ENCODE measurements at regions of chr9 and their contacts with region 1.

Region 1: GRCh38 chr9:114988962-114989599 is 58.7 kb upstream of the TNFSF8 start:
- DNase-seq: peak; percentile 47
- H3K4me3 Mint-ChIP-seq: peak overlapping the region; percentile 37
- H3K27ac Mint-ChIP-seq: peak overlapping the region; percentile 95
- H3K4me1 Mint-ChIP-seq: peaks cover 87% of the 10 kb centered on the region
- H3K27me3 Mint-ChIP-seq: no peaks in the 10 kb centered on the region

Region 2: GRCh38 chr9:114691046-114691955 is 297.8 kb before region 1 on chr9:
- intact Hi-C with region 1: loop called (anchors 1 kb)
- DNase-seq: peak; percentile 80
- H3K4me3 Mint-ChIP-seq: peak overlapping the region; percentile 69
- H3K27ac Mint-ChIP-seq: peak overlapping the region; percentile 98
- H3K4me1 Mint-ChIP-seq: peaks cover 93% of the 10 kb centered on the region
- H3K27me3 Mint-ChIP-seq: no peaks in the 10 kb centered on the region

Region 3: GRCh38 chr9:114718801-114719221 is 270.3 kb before region 1 on chr9:
- intact Hi-C with region 1: loop called (anchors 1 kb)
- DNase-seq: peak; percentile 94
- H3K4me3 Mint-ChIP-seq: peak overlapping the region; percentile 28
- H3K27ac Mint-ChIP-seq: peak overlapping the region; percentile 98
- H3K4me1 Mint-ChIP-seq: peaks cover 82% of the 10 kb centered on the region
- H3K27me3 Mint-ChIP-seq: peaks cover 2% of the 10 kb centered on the region

Region 4: DNA sequence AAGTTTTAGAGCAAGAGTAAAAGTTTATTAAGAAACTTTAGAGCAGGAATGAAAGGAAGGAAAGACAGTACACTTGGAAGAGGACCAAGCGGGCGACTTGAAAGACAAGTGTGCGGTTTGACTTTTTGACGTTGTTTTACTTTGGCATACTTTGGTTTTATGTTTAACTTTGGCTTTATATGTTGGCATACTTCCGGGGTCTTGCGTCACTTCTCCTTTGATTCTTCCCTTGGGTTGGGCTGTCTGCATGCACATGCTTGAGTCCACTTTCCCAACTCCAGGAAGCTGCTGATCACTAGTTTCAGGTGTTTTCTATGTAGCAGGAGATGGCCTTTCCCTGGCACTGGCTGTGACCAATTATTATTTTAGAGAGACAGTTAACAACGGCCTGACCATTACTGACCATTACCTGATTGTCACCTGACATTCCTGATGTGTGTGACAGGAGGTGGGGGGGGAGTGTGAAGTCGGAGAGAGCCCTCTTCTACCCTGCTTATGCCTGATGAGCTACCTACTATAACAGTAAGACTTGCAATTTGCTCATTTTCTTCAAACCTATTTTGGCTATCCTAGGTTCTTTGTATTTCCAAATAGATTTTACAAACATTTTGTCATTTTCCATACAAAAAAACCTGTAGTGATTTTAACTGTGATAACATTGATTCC is 104.2 kb before region 1 on chr9:
- intact Hi-C with region 1: no loop called
- DNase-seq: no peak
- H3K4me3 Mint-ChIP-seq: no peak overlapping the region
- H3K27ac Mint-ChIP-seq: no peak overlapping the region
- H3K4me1 Mint-ChIP-seq: peaks cover 22% of the 10 kb centered on the region
- H3K27me3 Mint-ChIP-seq: no peaks in the 10 kb centered on the region

Region 5: GRCh38 chr9:114919611-114920010 is 69.5 kb before region 1 on chr9:
- intact Hi-C with region 1: loop called (anchors 1 kb)
- DNase-seq: no peak
- H3K4me3 Mint-ChIP-seq: peak overlapping the region; percentile 63
- H3K27ac Mint-ChIP-seq: peak overlapping the region; percentile 64
- H3K4me1 Mint-ChIP-seq: peaks cover 94% of the 10 kb centered on the region
- H3K27me3 Mint-ChIP-seq: no peaks in the 10 kb centered on the region

Region 6: DNA sequence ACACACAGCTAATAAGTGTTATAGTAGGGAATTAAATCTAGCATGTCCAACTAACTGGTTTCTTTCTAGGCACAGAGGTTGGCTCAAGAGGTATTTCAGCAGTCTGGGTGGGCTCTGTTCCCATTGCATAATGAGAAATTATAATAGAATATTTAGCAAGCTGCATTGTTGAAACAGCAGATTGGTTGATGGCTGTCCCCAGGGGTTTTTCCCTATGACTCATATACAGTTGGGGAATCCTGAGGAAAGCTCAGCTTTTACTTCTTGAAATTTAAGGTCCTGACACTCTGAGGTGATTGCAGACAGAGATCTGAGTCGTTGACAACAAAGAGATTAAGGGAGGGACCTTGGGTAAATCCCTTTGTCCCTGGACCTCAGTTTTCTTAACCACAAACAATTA is 20.4 kb before region 1 on chr9:
- intact Hi-C with region 1: loop called (anchors 1 kb)
- DNase-seq: no peak
- H3K4me3 Mint-ChIP-seq: no peak overlapping the region
- H3K27ac Mint-ChIP-seq: peak overlapping the region; percentile 53
- H3K4me1 Mint-ChIP-seq: peaks cover 24% of the 10 kb centered on the region
- H3K27me3 Mint-ChIP-seq: peaks cover 2% of the 10 kb centered on the region

Region 7: GRCh38 chr9:115008536-115009270 is 19.6 kb after region 1 on chr9:
- intact Hi-C with region 1: loop called (anchors 1 kb)
- DNase-seq: peak; percentile 23
- H3K4me3 Mint-ChIP-seq: no peak overlapping the region
- H3K27ac Mint-ChIP-seq: no peak overlapping the region
- H3K4me1 Mint-ChIP-seq: peaks cover 97% of the 10 kb centered on the region
- H3K27me3 Mint-ChIP-seq: no peaks in the 10 kb centered on the region

Measured in activated T-helper 1 cell treated with anti-CD3 and anti-CD28 coated beads, Interleukin-12 subunit alpha, Interleukin-12 subunit beta, Interleukin-2, Interleukin-4 antibody, amounts not matched to agents 30 ng/mL and 10 ng/mL and 1 ng/mL, durations not matched to agents 14 hours and 24 hours and 36 hours (primary cell).